ENCODE measurements at regions of chr3 and their contacts with region 1.

Region 1: GRCh38 chr3:124995460-124995994 is 60.3 kb downstream of the HEG1 start:
- DNase-seq: no peak
- H3K4me3 ChIP-seq: no peak overlapping the region
- H3K27me3 ChIP-seq: no peaks in the 10 kb centered on the region
- CTCF ChIP-seq: peak; percentile 56

Region 2: DNA sequence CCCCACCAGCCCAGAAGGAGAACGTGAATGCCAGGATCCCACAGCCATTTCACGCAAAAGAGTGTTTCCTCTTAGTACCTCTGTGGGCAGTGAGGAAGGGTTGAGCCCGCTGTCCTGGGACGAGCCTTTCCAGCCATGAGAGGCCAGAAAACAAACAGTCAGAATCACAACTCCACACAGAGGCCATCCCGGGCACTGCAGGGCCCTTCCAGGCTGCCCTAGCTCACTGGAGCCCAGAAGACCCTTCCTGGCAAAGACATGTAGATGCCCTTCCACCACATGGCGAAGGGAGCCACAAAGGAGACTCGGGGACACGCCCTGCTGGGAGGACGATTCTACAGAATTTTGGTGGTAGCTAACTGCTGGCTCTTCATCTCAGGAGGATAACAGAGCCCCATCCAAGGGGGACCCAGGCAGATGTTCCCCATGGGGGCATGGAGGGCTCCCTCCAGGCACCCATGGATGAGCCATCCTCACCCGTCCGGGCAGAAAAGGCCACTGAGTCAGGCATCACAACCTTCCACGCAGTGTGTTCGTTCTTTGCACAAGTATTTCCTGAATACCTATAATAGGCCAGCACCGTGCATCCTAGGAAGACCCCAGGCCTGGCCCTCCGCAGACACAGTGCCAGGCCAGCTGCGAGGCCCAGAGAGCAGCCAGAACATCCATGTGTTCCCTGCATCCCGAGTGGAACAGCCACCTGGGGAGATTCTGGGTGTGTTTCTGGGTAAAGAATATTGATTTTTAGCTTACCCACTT is 169.8 kb after region 1 on chr3:
- CTCF ChIA-PET with region 1: interaction called, 13 read pairs
- POLR2A ChIA-PET with region 1: no interaction called
- DNase-seq: no peak
- H3K4me3 ChIP-seq: no peak overlapping the region
- H3K27me3 ChIP-seq: no peaks in the 10 kb centered on the region
- CTCF ChIP-seq: peak; percentile 70

Region 3: DNA sequence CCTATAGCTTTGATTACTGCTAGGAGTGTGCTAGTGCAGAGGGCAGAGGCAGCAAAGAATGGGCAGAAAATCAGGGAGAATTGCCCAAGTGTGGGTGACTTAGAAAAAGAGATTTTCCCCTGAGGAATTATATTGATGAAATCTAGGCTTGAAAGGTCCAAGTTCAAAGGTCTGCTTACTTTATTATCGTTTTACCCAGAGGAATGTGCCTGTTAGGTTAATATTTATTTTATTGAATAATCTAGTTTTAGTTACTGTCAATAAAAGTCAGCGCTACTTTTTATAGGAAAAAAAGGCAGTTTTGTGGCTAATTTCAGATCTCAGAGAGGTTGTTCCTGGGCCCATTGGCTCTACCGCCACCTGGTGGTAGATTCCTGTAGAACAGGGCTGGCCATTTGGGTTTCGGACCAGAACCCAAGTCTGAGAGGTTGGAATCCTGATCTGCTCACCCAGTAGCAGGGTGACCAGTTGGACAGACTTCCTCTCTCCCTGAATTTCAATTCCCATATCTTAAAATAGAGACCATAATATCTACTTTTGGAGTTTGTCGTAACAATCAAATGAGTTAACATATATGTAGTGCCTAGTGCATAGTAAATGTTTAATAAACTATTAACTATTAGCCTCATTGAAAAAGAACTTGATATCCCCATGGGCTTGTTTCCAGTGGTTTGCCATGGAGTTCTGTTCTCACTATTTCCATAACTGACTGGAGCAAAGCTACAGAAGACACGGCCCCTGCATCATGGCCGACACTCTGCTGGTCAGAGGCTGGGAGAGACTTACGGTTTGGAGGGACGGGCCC is 442.3 kb after region 1 on chr3:
- CTCF ChIA-PET with region 1: interaction called, 26 read pairs
- POLR2A ChIA-PET with region 1: no interaction called
- DNase-seq: no peak
- H3K4me3 ChIP-seq: no peak overlapping the region
- H3K27me3 ChIP-seq: no peaks in the 10 kb centered on the region
- CTCF ChIP-seq: peak; percentile 95

Region 4: DNA sequence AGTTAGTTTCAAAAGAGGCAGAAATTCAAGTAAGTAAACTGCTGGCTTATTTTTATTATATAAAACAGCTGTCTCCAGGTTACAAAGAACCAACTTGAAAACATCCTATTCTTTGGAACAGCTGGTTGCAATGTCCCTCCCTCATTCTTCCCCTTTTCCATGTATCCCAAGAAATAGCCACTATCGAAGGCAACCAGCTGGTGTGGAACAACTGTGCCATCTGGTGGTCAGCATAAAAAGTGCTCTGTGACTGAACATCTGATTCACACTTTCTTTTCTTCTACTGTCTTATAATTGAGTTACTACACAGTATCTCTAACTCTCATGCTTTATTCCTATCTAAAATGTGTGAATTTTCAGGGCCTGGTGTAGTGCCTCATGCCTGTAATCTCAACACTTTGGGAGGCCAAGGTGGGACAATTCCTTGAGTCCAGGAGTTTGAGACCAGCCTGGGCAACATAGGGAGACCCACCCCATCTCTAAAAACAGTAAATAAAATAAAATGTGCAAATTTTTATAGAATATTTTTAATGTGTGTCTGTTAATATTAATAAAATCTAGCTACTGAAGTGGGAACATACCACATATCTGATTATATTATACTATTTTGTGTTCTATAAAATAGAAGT is 590.2 kb after region 1 on chr3:
- CTCF ChIA-PET with region 1: interaction called, 11 read pairs
- POLR2A ChIA-PET with region 1: no interaction called
- DNase-seq: peak; percentile 15
- H3K4me3 ChIP-seq: no peak overlapping the region
- H3K27me3 ChIP-seq: no peaks in the 10 kb centered on the region
- CTCF ChIP-seq: peak; percentile 86